Caki2 (cell line): ENCODE measurements at regions of chr7 and their contacts with region 1.

Region 1: GRCh38 chr7:45917658-45918057 is 3.4 kb downstream of the IGFBP3 start:
- DNase-seq: peak; percentile 76

Region 2: GRCh38 chr7:45978010-45978681 is 60.5 kb after region 1 on chr7:
- in situ Hi-C with region 1: no loop called
- DNase-seq: peak; percentile 99

Region 3: GRCh38 chr7:46764100-46764936 is 846.7 kb after region 1 on chr7:
- in situ Hi-C with region 1: loop called (anchors 25 kb)
- DNase-seq: peak; percentile 97